ENCODE measurements at regions of chr18 and their contacts with region 1.

Region 1: GRCh38 chr18:9066817-9067306 is 35.6 kb upstream of the NDUFV2 start:
- DNase-seq: no peak
- H3K4me3 ChIP-seq: no peak overlapping the region
- H3K27ac ChIP-seq: no peak overlapping the region
- H3K4me1 ChIP-seq: no peaks in the 10 kb centered on the region
- H3K27me3 ChIP-seq: no peaks in the 10 kb centered on the region
- CTCF ChIP-seq: no peak
- POLR2A ChIP-seq: no peak

Region 2: GRCh38 chr18:9516437-9517064 is 449.7 kb after region 1 on chr18:
- intact Hi-C with region 1: loop called (anchors 10 kb)
- DNase-seq: no peak
- H3K4me3 ChIP-seq: no peak overlapping the region
- H3K27ac ChIP-seq: no peak overlapping the region
- H3K4me1 ChIP-seq: peaks cover 4% of the 10 kb centered on the region
- H3K27me3 ChIP-seq: no peaks in the 10 kb centered on the region
- CTCF ChIP-seq: peak; percentile 36 to 73 (median 69)
- POLR2A ChIP-seq: no peak

Measured in vagina (tissue), 2 donors.